Vagina (tissue), 2 donors: ENCODE measurements at regions of chr1 and their contacts with region 1.

Region 1: GRCh38 chr1:2174348-2175054 is 20.1 kb downstream of the FAAP20 start:
- DNase-seq: no peak
- H3K4me3 ChIP-seq: peak overlapping the region; percentile 40 to 55
- H3K27ac ChIP-seq: peak overlapping the region; percentile 45
- H3K4me1 ChIP-seq: peaks cover 13% of the 10 kb centered on the region
- H3K27me3 ChIP-seq: no peaks in the 10 kb centered on the region
- CTCF ChIP-seq: peak; percentile 65 to 81 (median 78)
- POLR2A ChIP-seq: no peak

Region 2: DNA sequence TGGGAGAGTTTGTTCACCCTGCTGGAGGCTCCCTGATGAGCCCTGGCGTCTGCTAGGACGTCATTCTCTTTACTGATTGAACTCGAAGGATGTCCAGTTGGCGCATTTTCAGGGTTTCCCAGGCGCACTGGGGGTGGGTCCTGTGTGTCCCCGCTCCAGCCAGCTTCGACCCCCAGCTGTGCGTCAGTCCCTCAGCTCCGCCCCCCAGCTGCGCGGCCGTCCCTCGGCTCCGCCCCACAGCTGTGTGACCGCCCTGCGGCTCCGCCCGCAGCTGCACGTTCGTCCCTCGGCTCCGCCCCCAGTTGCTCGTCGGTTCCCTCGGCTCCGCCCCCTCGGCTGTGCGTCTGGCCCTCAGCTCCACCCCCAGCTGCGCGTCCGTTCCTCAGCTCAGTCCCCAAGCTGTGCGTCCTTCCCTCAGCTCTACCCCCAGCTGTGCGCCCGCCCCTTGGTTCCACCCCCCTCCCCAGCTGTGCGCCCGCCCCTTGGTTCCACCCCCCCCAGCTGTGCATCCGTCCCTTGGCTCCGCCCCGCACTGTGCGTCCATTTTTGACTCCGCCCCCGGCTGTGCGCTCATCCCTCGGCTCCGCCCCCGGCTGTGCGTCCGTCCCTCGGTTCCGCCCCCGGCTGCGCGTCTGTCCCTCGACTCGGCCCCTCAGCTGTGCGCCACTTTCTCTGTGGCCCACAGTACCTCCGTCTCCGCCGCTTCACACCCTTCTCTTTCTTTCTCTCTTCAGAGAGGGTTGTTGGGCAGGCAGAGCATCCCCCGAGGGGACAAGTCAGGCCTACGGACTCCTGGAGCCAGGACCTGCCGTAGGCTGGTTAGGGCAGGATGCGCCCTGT is 41.2 kb before region 1 on chr1:
- intact Hi-C with region 1: loop called (anchors 5 kb)
- DNase-seq: peak in 1 of 2 donors; percentile 98
- H3K4me3 ChIP-seq: peak overlapping the region; percentile 39 to 51
- H3K27ac ChIP-seq: peak overlapping the region; percentile 87
- H3K4me1 ChIP-seq: peaks cover 33% of the 10 kb centered on the region
- H3K27me3 ChIP-seq: no peaks in the 10 kb centered on the region
- CTCF ChIP-seq: no peak
- POLR2A ChIP-seq: peak in 1 of 2 donors; percentile 61